K562 (cell line): ENCODE measurements at regions of chr1 and their contacts with region 1.

Region 1: GRCh38 chr1:206455666-206456344 is 14.5 kb upstream of the IKBKE start:
- DNase-seq: peak; percentile 82 to 99 (median 90)
- ATAC-seq: peak; percentile 98
- H3K4me3 ChIP-seq: no peak overlapping the region
- H3K27ac ChIP-seq: peak overlapping the region; percentile 26; the same call in 2 of the 3 replicates
- H3K4me1 ChIP-seq: peaks cover 23 to 34% of the 10 kb centered on the region in 2 experiments
- H3K27me3 ChIP-seq: no peaks in the 10 kb centered on the region
- CTCF ChIP-seq: no peak
- EP300 ChIP-seq: peak; percentile 24; the same call in 1 of the 2 replicates
- POLR2A ChIP-seq: no peak
- RAD21 ChIP-seq: peak in 1 of 2 experiments; percentile 58; a peak in 2 of 4 replicates

Region 2: GRCh38 chr1:206445116-206445515 is 10.7 kb before region 1 on chr1:
- CTCF ChIA-PET with region 1: no interaction called
- POLR2A ChIA-PET with region 1: interaction called, 10 read pairs
- in situ Hi-C with region 1: no loop called
- intact Hi-C with region 1: loop called (anchors 2 kb)
- DNase-seq: no peak
- ATAC-seq: no peak
- H3K4me3 ChIP-seq: no peak overlapping the region
- H3K27ac ChIP-seq: no peak overlapping the region
- H3K4me1 ChIP-seq: peaks cover 0 to 2% of the 10 kb centered on the region in 2 experiments; a peak in 1 of 5 replicates
- H3K27me3 ChIP-seq: no peaks in the 10 kb centered on the region
- CTCF ChIP-seq: no peak
- EP300 ChIP-seq: no peak
- POLR2A ChIP-seq: no peak
- RAD21 ChIP-seq: no peak

Region 3: DNA sequence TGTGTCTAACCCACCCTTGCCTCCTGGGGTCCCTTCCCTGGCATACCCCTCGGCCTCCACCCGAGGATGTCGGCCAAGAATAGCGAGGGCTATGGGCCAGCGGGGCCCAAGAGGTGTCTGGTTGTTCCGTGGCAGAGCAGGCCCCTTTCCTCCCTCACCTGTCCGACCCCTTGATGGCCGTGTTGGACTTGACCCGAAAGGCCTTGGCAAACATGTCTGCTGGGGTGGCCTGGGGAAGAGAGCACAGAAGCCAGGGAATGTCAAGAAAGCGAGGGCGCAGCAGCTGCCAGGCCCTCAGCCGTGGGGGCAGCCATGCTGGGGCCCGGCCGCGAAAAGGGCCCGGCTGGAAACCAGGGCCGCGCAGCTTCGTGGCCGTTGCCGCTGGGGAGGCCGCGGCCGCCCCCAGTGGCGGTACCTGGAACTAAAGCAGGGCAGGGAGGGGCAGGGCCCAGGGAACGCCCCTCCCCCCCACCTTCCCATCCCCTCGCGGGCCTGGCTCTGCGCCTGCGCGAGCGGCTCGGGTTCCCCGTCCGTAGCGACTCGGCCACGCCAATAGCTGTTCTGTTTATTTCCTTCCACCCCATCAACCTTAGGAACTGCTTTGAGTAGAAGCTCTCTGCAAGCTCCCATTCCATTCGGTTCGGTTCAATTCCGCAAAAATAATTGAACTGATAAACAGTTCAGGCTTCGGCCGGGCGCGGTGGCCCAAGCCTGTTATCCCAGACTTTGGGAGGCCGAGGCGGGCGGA is 156.5 kb after region 1 on chr1 and contains the start of gene EIF2D:
- CTCF ChIA-PET with region 1: no interaction called
- POLR2A ChIA-PET with region 1: no interaction called
- in situ Hi-C with region 1: no loop called
- intact Hi-C with region 1: no loop called
- DNase-seq: peak; percentile 98 to 100 (median 100)
- ATAC-seq: peak; percentile 98
- H3K4me3 ChIP-seq: peak within 1 kb of the TSS; percentile 97
- H3K27ac ChIP-seq: peak within 1 kb of the TSS; percentile 94
- H3K4me1 ChIP-seq: peaks cover 5 to 7% of the 10 kb centered on the region in 2 experiments; a peak in 4 of 5 replicates
- H3K27me3 ChIP-seq: no peaks in the 10 kb centered on the region
- CTCF ChIP-seq: peak; percentile 98 to 99 (median 98)
- EP300 ChIP-seq: no peak
- POLR2A ChIP-seq: peak; percentile 99
- RAD21 ChIP-seq: peak; percentile 73
- polyA plus RNA-seq, gene EIF2D: 86.9 to 130 TPM

Region 4: GRCh38 chr1:206674745-206675175 is 219.0 kb after region 1 on chr1:
- CTCF ChIA-PET with region 1: no interaction called
- POLR2A ChIA-PET with region 1: no interaction called
- in situ Hi-C with region 1: no loop called
- intact Hi-C with region 1: no loop called
- DNase-seq: peak in 2 of 4 experiments; percentile 62 to 69
- ATAC-seq: no peak
- H3K4me3 ChIP-seq: no peak overlapping the region
- H3K27ac ChIP-seq: no peak overlapping the region; the same call in 2 of the 3 replicates
- H3K4me1 ChIP-seq: peaks cover 42 to 72% of the 10 kb centered on the region in 2 experiments
- H3K27me3 ChIP-seq: no peaks in the 10 kb centered on the region
- CTCF ChIP-seq: no peak
- EP300 ChIP-seq: no peak
- POLR2A ChIP-seq: no peak
- RAD21 ChIP-seq: no peak